Left ventricle myocardium superior (tissue), 1 donor: ENCODE measurements at regions of chr10 and their contacts with region 1.

Region 1: DNA sequence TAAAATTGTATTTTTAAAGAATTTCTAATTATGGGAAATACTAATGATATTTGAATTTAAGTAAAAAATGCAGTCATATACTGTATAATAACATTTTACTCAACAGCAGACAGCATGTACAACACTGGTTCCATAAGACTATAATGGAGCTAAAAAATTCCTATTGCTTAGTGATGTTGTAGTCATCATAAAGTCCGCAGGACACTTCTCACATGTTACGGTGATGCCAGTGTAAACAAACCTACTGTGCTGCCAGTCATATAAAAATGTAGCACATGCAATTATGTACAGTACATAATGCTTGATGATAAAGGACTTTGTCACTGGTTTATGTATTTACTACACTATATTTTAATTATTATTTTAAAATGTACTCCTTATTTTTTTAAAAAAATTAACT is 629.3 kb downstream of the IPMK start:
- DNase-seq: no peak
- ATAC-seq: no peak

Region 2: GRCh38 chr10:57689596-57690297 is 51.3 kb after region 1 on chr10:
- intact Hi-C with region 1: loop called (anchors 2 kb)
- DNase-seq: no peak
- ATAC-seq: no peak